A549 (cell line): ENCODE measurements at regions of chr3 and their contacts with region 1.

Region 1: DNA sequence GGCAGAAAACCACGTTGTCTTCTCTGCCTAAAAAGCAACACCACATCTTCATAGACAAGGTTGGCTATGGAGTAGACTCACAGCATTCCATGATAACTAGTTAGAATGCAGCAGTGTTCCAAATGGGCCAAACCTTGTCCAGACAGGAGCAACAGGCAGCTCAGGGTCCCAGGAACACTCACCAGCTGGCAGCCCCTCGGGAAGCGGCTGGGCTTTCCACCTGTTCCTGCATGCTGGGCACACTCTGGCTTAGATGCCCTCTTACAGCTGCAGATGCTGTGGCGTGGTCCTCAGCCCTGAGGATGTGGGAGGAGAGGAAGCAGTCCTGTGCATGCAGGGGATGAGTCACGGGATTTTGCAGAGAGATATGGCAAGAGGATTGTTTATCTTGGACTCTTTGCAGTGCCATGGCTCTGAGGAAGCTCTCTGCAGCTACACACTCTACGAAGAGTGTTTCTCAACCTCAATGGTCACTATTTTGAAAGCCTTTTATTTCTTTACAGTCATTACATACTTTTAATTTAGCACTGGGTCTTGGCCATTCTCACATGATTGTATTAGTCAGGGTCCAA is 11.3 kb downstream of the NRROS start:
- DNase-seq: peak; percentile 64 to 88
- ATAC-seq: peak; percentile 96 to 98
- H3K4me3 ChIP-seq: no peak overlapping the region
- H3K27ac ChIP-seq: peak overlapping the region; percentile 68 to 82
- H3K4me1 ChIP-seq: peaks cover 16% of the 10 kb centered on the region
- CTCF ChIP-seq: no peak
- EP300 ChIP-seq: no peak
- POLR2A ChIP-seq: no peak
- RAD21 ChIP-seq: no peak

Region 2: GRCh38 chr3:196602673-196603072 is 48.2 kb before region 1 on chr3:
- CTCF ChIA-PET with region 1: no interaction called
- POLR2A ChIA-PET with region 1: interaction called, 12 read pairs
- DNase-seq: no peak
- ATAC-seq: no peak
- H3K4me3 ChIP-seq: no peak overlapping the region
- H3K27ac ChIP-seq: no peak overlapping the region
- H3K4me1 ChIP-seq: no peaks in the 10 kb centered on the region
- CTCF ChIP-seq: no peak
- EP300 ChIP-seq: no peak
- POLR2A ChIP-seq: no peak
- RAD21 ChIP-seq: no peak

Region 3: GRCh38 chr3:196739671-196740480 is 89.0 kb after region 1 on chr3 and contains the start of gene PAK2:
- CTCF ChIA-PET with region 1: no interaction called
- POLR2A ChIA-PET with region 1: no interaction called
- DNase-seq: peak; percentile 56 to 85
- ATAC-seq: peak; percentile 89 to 97
- H3K4me3 ChIP-seq: peak within 1 kb of the TSS; percentile 70
- H3K27ac ChIP-seq: peak within 1 kb of the TSS; percentile 94 to 95
- H3K4me1 ChIP-seq: peaks cover 7% of the 10 kb centered on the region; the same call in 1 of the 3 replicates
- CTCF ChIP-seq: no peak
- EP300 ChIP-seq: no peak
- POLR2A ChIP-seq: peak; percentile 78
- RAD21 ChIP-seq: no peak
- polyA plus RNA-seq, gene PAK2: 49.8 and 61.8 TPM in 2 replicates

Region 4: DNA sequence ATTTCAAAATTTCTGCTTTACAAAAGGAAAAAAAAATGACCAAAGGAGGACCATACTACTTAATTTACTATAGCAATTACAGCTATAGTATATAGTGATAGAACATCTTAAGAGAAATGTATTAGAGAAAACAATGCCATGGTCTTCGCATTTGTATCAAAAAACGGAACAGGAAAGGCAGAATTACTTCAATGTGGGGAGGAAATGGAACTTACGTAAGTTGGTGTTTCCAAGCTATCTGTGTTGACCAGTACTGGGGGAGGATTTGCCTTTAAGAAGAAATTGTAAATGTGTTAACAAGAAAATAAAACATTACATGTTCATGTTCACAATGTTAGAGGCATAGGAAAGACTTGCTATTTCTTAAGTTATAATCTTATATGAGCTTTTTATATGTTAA is 498.7 kb after region 1 on chr3:
- CTCF ChIA-PET with region 1: no interaction called
- POLR2A ChIA-PET with region 1: no interaction called
- DNase-seq: no peak
- ATAC-seq: no peak
- H3K4me3 ChIP-seq: no peak overlapping the region
- H3K27ac ChIP-seq: no peak overlapping the region
- H3K4me1 ChIP-seq: peaks cover 6% of the 10 kb centered on the region; the same call in 2 of the 3 replicates
- CTCF ChIP-seq: no peak
- EP300 ChIP-seq: no peak
- POLR2A ChIP-seq: no peak
- RAD21 ChIP-seq: no peak